Upper lobe of right lung (tissue), 1 donor: ENCODE measurements at regions of chr5 and their contacts with region 1.

Region 1: GRCh38 chr5:135551593-135552447 is 16.1 kb upstream of the NEUROG1 start:
- DNase-seq: no peak
- ATAC-seq: peak; percentile 88
- H3K4me3 ChIP-seq: no peak overlapping the region
- H3K27ac ChIP-seq: no peak overlapping the region
- H3K4me1 ChIP-seq: no peaks in the 10 kb centered on the region
- H3K27me3 ChIP-seq: peaks cover 52% of the 10 kb centered on the region
- CTCF ChIP-seq: peak; percentile 86

Region 2: DNA sequence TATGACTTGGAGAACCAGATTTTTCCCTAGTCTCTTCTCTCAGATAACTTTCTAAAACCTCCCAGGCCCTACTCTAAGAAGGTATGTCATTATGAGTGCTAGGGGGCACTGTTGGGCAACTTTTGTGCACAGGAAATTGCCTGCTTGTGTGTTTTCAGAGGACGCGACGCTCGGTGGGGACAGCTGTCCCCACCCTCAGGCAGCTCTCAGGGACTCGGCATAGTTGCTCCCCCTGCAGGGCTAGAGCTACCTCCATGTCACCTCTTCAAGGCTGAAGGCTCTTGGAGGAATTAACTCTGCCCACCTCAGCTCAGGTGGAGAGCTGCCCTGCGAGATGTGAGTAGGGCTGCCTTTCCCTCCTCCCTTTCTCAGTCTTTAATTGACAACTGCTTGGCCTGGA is 89.5 kb before region 1 on chr5:
- intact Hi-C with region 1: loop called (anchors 5 kb)
- DNase-seq: peak; percentile 58
- ATAC-seq: peak; percentile 37
- H3K4me3 ChIP-seq: no peak overlapping the region
- H3K27ac ChIP-seq: no peak overlapping the region
- H3K4me1 ChIP-seq: peaks cover 27% of the 10 kb centered on the region
- H3K27me3 ChIP-seq: peaks cover 22% of the 10 kb centered on the region
- CTCF ChIP-seq: peak; percentile 51

Region 3: DNA sequence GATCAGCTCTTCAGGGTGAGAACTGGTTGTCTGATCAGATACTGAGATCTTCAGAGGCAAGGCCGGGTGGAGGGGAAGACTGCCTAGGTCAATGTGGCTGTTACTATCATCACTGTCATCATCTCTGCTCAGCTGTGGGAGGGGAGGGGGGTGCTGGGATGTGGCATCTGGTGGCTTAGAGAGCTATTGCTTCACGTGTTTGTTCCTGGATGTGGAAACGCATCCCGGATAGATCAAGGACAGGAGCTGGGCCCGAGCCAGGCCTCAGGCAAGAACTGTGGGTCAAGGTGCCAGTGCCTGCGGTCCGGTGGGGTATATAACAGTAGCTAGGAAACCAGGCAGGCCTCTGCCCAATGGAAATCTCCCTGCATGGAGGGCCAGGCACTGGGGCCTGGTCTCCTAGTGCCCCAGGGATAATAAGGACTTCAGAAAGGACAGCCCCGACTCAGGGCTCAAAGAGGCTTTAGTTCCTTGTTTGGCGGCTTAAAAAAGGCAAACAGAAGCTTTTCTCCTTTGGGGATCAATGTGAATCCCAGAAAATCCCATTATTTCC is 69.4 kb before region 1 on chr5:
- intact Hi-C with region 1: no loop called
- DNase-seq: no peak
- ATAC-seq: no peak
- H3K4me3 ChIP-seq: no peak overlapping the region
- H3K27ac ChIP-seq: no peak overlapping the region
- H3K4me1 ChIP-seq: no peaks in the 10 kb centered on the region
- H3K27me3 ChIP-seq: peaks cover 29% of the 10 kb centered on the region
- CTCF ChIP-seq: no peak